WTC11 (cell line): ENCODE measurements at regions of chr16 and their contacts with region 1.

Region 1: GRCh38 chr16:68762996-68763756 is 26.1 kb downstream of the CDH1 start:
- DNase-seq: peak; percentile 54
- ATAC-seq: peak; percentile 83
- H3K4me3 Mint-ChIP-seq: peak overlapping the region; percentile 52
- H3K27ac Mint-ChIP-seq: peak overlapping the region; percentile 99
- H3K4me1 Mint-ChIP-seq: peaks cover 70% of the 10 kb centered on the region
- H3K27me3 Mint-ChIP-seq: no peaks in the 10 kb centered on the region
- CTCF ChIP-seq: no peak

Region 2: GRCh38 chr16:68656751-68657150 is 106.4 kb before region 1 on chr16:
- CTCF ChIA-PET with region 1: no interaction called
- POLR2A ChIA-PET with region 1: no interaction called
- DNase-seq: no peak
- ATAC-seq: peak; percentile 49
- H3K4me3 Mint-ChIP-seq: no peak overlapping the region
- H3K27ac Mint-ChIP-seq: no peak overlapping the region
- H3K4me1 Mint-ChIP-seq: peaks cover 29% of the 10 kb centered on the region
- H3K27me3 Mint-ChIP-seq: no peaks in the 10 kb centered on the region
- CTCF ChIP-seq: no peak

Region 3: GRCh38 chr16:68713361-68713760 is 49.8 kb before region 1 on chr16:
- CTCF ChIA-PET with region 1: no interaction called
- POLR2A ChIA-PET with region 1: no interaction called
- DNase-seq: no peak
- ATAC-seq: no peak
- H3K4me3 Mint-ChIP-seq: no peak overlapping the region
- H3K27ac Mint-ChIP-seq: no peak overlapping the region; the same call in 1 of the 2 replicates
- H3K4me1 Mint-ChIP-seq: peaks cover 41% of the 10 kb centered on the region
- H3K27me3 Mint-ChIP-seq: no peaks in the 10 kb centered on the region
- CTCF ChIP-seq: no peak

Region 4: GRCh38 chr16:68737046-68737729 is 26.0 kb before region 1 on chr16 and contains the start of gene CDH1:
- CTCF ChIA-PET with region 1: interaction called, 3 read pairs
- POLR2A ChIA-PET with region 1: interaction called, 13 read pairs
- DNase-seq: peak; percentile 99
- ATAC-seq: peak; percentile 97
- H3K4me3 Mint-ChIP-seq: peak within 1 kb of the TSS; percentile 99
- H3K27ac Mint-ChIP-seq: peak within 1 kb of the TSS; percentile 100
- H3K4me1 Mint-ChIP-seq: peaks cover 56% of the 10 kb centered on the region
- H3K27me3 Mint-ChIP-seq: no peaks in the 10 kb centered on the region
- CTCF ChIP-seq: no peak
- total RNA-seq, gene CDH1: 265 to 281 TPM (median 278 TPM) in 3 replicates